Panc1 (cell line): ENCODE measurements at regions of chr1 and their contacts with region 1.

Region 1: GRCh38 chr1:63537940-63538339 is 14.6 kb downstream of the EFCAB7 start:
- DNase-seq: no peak
- ATAC-seq: no peak
- H3K4me3 ChIP-seq: no peak overlapping the region
- H3K27ac ChIP-seq: no peak overlapping the region
- H3K4me1 ChIP-seq: no peaks in the 10 kb centered on the region
- H3K27me3 ChIP-seq: no peaks in the 10 kb centered on the region
- CTCF ChIP-seq: no peak; the same call in 1 of the 2 replicates

Region 2: GRCh38 chr1:62841587-62842169 is 696.3 kb before region 1 on chr1:
- CTCF ChIA-PET with region 1: no interaction called
- POLR2A ChIA-PET with region 1: no interaction called
- in situ Hi-C with region 1: no loop called
- intact Hi-C with region 1: loop called (anchors 10 kb)
- DNase-seq: peak; percentile 50
- ATAC-seq: peak; percentile 83
- H3K4me3 ChIP-seq: no peak overlapping the region
- H3K27ac ChIP-seq: no peak overlapping the region
- H3K4me1 ChIP-seq: no peaks in the 10 kb centered on the region
- H3K27me3 ChIP-seq: no peaks in the 10 kb centered on the region
- CTCF ChIP-seq: peak; percentile 68; the same call in 1 of the 2 replicates

Region 3: GRCh38 chr1:63463248-63463647 is 74.7 kb before region 1 on chr1:
- CTCF ChIA-PET with region 1: interaction called, 6 read pairs
- POLR2A ChIA-PET with region 1: no interaction called
- in situ Hi-C with region 1: no loop called
- intact Hi-C with region 1: loop called (anchors 10 kb)
- DNase-seq: no peak
- ATAC-seq: no peak
- H3K4me3 ChIP-seq: no peak overlapping the region
- H3K27ac ChIP-seq: no peak overlapping the region
- H3K4me1 ChIP-seq: no peaks in the 10 kb centered on the region
- H3K27me3 ChIP-seq: no peaks in the 10 kb centered on the region
- CTCF ChIP-seq: no peak

Region 4: GRCh38 chr1:63635681-63636080 is 97.7 kb after region 1 on chr1:
- CTCF ChIA-PET with region 1: no interaction called
- POLR2A ChIA-PET with region 1: no interaction called
- in situ Hi-C with region 1: no loop called
- intact Hi-C with region 1: no loop called
- DNase-seq: no peak
- ATAC-seq: no peak
- H3K4me3 ChIP-seq: no peak overlapping the region
- H3K27ac ChIP-seq: no peak overlapping the region
- H3K4me1 ChIP-seq: no peaks in the 10 kb centered on the region
- H3K27me3 ChIP-seq: no peaks in the 10 kb centered on the region
- CTCF ChIP-seq: no peak

Region 5: DNA sequence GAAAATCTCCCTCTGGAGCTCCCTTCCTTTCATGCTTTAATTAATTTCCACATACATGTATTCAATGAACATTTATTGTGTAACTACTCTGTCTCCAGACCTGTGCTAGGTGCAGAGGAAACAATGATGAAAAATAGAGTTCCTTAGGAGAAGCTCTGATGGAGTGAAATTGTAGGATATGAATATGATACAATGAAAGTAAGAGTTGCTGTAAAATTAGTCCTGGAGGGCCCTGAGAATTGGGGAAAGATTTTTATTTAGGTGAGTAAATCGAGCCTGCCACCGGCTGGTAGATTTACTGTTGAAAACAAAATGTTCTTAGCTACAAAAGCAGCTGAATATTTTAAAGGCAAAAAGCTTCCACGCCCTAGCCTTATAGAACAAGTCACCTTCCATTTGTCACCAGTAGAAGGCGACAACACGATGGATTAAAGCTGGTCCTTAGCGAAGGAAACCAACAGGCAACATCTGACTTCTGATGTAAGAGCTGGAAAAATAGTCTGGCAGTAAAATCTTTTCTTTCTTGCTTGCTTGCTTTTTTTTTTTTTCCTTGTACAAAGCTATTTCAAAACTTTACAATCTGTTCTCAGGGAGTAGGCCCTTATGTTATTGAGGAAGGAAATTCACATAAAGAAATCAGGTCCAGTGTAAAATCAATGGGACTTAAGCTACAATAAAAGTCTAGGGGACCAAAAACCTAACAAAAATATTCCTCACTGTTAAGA is 153.9 kb after region 1 on chr1:
- CTCF ChIA-PET with region 1: no interaction called
- POLR2A ChIA-PET with region 1: no interaction called
- in situ Hi-C with region 1: no loop called
- intact Hi-C with region 1: no loop called
- DNase-seq: peak; percentile 92
- ATAC-seq: peak; percentile 95
- H3K4me3 ChIP-seq: no peak overlapping the region
- H3K27ac ChIP-seq: peak overlapping the region; percentile 93
- H3K4me1 ChIP-seq: peaks cover 14% of the 10 kb centered on the region
- H3K27me3 ChIP-seq: no peaks in the 10 kb centered on the region
- CTCF ChIP-seq: peak; percentile 87

Region 6: GRCh38 chr1:63721531-63722189 is 183.7 kb after region 1 on chr1:
- CTCF ChIA-PET with region 1: no interaction called
- POLR2A ChIA-PET with region 1: no interaction called
- in situ Hi-C with region 1: no loop called
- intact Hi-C with region 1: no loop called
- DNase-seq: no peak
- ATAC-seq: peak; percentile 64; the same call in 1 of the 2 replicates
- H3K4me3 ChIP-seq: no peak overlapping the region
- H3K27ac ChIP-seq: peak overlapping the region; percentile 55; the same call in 1 of the 2 replicates
- H3K4me1 ChIP-seq: peaks cover 13% of the 10 kb centered on the region
- H3K27me3 ChIP-seq: no peaks in the 10 kb centered on the region
- CTCF ChIP-seq: no peak